ENCODE measurements at regions of chr3 and their contacts with region 1.

Region 1: DNA sequence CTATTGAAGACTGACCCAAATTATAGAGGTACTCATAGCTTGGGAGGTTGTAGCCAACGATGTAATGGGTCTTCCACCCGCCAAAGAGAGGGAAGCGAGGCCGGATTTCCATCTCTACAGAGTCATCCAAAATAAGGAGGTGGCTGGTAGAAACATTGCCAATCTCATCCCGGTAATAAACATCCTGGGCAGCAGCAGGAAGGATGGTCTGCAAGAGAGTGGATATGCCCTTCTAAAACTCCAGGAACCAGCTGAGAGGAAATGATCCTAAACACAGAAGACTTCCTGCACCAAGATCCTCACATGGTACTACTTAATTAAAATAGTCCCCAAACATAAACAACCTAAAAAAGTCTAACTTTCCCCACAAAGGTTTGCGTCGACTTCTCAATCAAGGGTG is 20.7 kb downstream of the RPN1 start:
- DNase-seq: no peak
- ATAC-seq: no peak
- H3K4me3 Mint-ChIP-seq: no peak overlapping the region
- H3K27ac Mint-ChIP-seq: no peak overlapping the region
- H3K4me1 Mint-ChIP-seq: no peaks in the 10 kb centered on the region
- H3K27me3 Mint-ChIP-seq: no peaks in the 10 kb centered on the region
- CTCF ChIP-seq: no peak

Region 2: GRCh38 chr3:127658234-127658633 is 971.7 kb before region 1 on chr3:
- CTCF ChIA-PET with region 1: no interaction called
- POLR2A ChIA-PET with region 1: interaction called, 18 read pairs
- intact Hi-C with region 1: no loop called
- DNase-seq: no peak
- ATAC-seq: no peak
- H3K4me3 Mint-ChIP-seq: no peak overlapping the region
- H3K27ac Mint-ChIP-seq: no peak overlapping the region
- H3K4me1 Mint-ChIP-seq: no peaks in the 10 kb centered on the region
- H3K27me3 Mint-ChIP-seq: no peaks in the 10 kb centered on the region
- CTCF ChIP-seq: no peak